CD14-positive monocyte (primary cell): ENCODE measurements at regions of chr9 and their contacts with region 1.

Region 1: GRCh38 chr9:117407436-117408022 is 7.3 kb downstream of the ASTN2 start:
- DNase-seq: no peak
- H3K4me3 ChIP-seq: no peak overlapping the region
- H3K4me3 Mint-ChIP-seq: no peak overlapping the region
- H3K27ac ChIP-seq: no peak overlapping the region
- H3K27ac Mint-ChIP-seq: no peak overlapping the region
- H3K4me1 ChIP-seq: no peaks in the 10 kb centered on the region
- H3K4me1 Mint-ChIP-seq: no peaks in the 10 kb centered on the region
- H3K27me3 ChIP-seq: peaks cover 0 to 20% of the 10 kb centered on the region in 2 donors
- H3K27me3 Mint-ChIP-seq: peaks cover 32 to 48% (median 34%) of the 10 kb centered on the region in 3 donors
- CTCF ChIP-seq: no peak

Region 2: GRCh38 chr9:116737152-116737546 is 670.4 kb before region 1 on chr9:
- intact Hi-C with region 1: loop called in 1 of 2 experiments (anchors 5 kb)
- DNase-seq: peak; percentile 4 to 28 (median 25)
- H3K4me3 ChIP-seq: no peak overlapping the region
- H3K4me3 Mint-ChIP-seq: no peak overlapping the region
- H3K27ac ChIP-seq: no peak overlapping the region
- H3K27ac Mint-ChIP-seq: no peak overlapping the region
- H3K4me1 ChIP-seq: no peaks in the 10 kb centered on the region
- H3K4me1 Mint-ChIP-seq: peaks cover 2% of the 10 kb centered on the region
- H3K27me3 ChIP-seq: no peaks in the 10 kb centered on the region
- H3K27me3 Mint-ChIP-seq: peaks cover 2 to 11% (median 4%) of the 10 kb centered on the region in 3 donors
- CTCF ChIP-seq: peak; percentile 80